K562 (cell line): ENCODE measurements at regions of chrX and their contacts with region 1.

Region 1: GRCh38 chrX:48021026-48021900 is 14.5 kb downstream of the SPACA5 start:
- DNase-seq: peak; percentile 25 to 52 (median 34)
- ATAC-seq: peak; percentile 78
- H3K4me3 ChIP-seq: peak overlapping the region; percentile 46
- H3K27ac ChIP-seq: peak overlapping the region; percentile 76; the same call in 2 of the 3 replicates
- H3K4me1 ChIP-seq: no peaks in the 10 kb centered on the region
- H3K27me3 ChIP-seq: no peaks in the 10 kb centered on the region
- CTCF ChIP-seq: no peak
- EP300 ChIP-seq: no peak
- POLR2A ChIP-seq: no peak
- RAD21 ChIP-seq: no peak

Region 2: DNA sequence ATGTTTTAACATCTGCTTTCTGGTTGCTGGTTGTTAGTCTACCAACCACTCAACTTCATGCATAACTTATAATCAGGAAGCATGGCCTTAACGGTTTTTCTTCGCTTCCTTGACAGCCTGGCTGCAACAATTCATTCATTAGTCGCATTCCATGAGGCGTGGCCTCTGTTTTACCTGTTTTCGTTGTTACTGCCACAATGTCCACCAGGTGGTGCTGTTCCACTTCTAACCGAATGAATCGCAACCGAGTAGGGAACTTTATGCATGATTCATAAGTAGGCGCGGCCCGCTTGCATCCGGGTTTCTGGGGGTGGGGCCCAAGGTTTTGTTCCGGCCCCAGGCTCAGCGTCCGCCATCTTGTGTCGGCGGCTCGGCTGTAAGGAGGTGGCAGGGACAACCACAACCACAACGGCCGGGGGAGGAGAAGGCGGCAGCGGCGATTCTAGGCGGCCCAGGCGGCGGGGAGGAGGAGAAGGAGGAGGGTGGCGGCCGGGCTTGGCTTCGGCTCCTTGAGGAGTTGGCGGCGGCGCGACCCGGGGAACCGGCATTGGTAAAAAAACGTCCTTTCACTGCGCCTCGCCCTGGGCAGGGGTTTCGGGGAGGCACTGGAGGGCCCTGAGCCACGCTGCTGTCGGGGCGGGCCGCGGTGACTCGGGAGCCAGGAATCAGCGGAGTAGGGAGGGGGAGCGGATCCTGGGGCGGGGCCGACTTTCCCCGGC is 827.6 kb before region 1 on chrX and contains the start of gene UBA1:
- CTCF ChIA-PET with region 1: interaction called, 5 read pairs
- POLR2A ChIA-PET with region 1: no interaction called
- in situ Hi-C with region 1: no loop called
- intact Hi-C with region 1: loop called (anchors 5 kb)
- DNase-seq: peak; percentile 83 to 96 (median 88)
- ATAC-seq: peak; percentile 92
- H3K4me3 ChIP-seq: peak within 1 kb of the TSS; percentile 94
- H3K27ac ChIP-seq: peak within 1 kb of the TSS; percentile 94
- H3K4me1 ChIP-seq: peaks cover 6 to 23% of the 10 kb centered on the region in 2 experiments; a peak in 4 of 5 replicates
- H3K27me3 ChIP-seq: no peaks in the 10 kb centered on the region
- CTCF ChIP-seq: peak; percentile 74 to 89 (median 80)
- EP300 ChIP-seq: 0 out of 2 replicates have a peak, but pooled peaks have one; percentile 13
- POLR2A ChIP-seq: peak; percentile 94
- RAD21 ChIP-seq: peak; percentile 90 to 91
- polyA plus RNA-seq, gene UBA1: 32.0 to 40.1 TPM

Region 3: GRCh38 chrX:47523297-47523696 is 498.0 kb before region 1 on chrX:
- CTCF ChIA-PET with region 1: no interaction called
- POLR2A ChIA-PET with region 1: no interaction called
- in situ Hi-C with region 1: loop called (anchors 25 kb)
- intact Hi-C with region 1: no loop called
- DNase-seq: peak; percentile 81 to 87 (median 83)
- ATAC-seq: peak; percentile 100
- H3K4me3 ChIP-seq: peak overlapping the region; percentile 41
- H3K27ac ChIP-seq: no peak overlapping the region
- H3K4me1 ChIP-seq: peaks cover 0 to 11% of the 10 kb centered on the region in 2 experiments; a peak in 2 of 5 replicates
- H3K27me3 ChIP-seq: peaks cover 0 to 4% of the 10 kb centered on the region in 2 experiments; a peak in 1 of 5 replicates
- CTCF ChIP-seq: peak; percentile 69 to 90 (median 86)
- EP300 ChIP-seq: no peak
- POLR2A ChIP-seq: no peak
- RAD21 ChIP-seq: peak; percentile 86 to 87

Region 4: DNA sequence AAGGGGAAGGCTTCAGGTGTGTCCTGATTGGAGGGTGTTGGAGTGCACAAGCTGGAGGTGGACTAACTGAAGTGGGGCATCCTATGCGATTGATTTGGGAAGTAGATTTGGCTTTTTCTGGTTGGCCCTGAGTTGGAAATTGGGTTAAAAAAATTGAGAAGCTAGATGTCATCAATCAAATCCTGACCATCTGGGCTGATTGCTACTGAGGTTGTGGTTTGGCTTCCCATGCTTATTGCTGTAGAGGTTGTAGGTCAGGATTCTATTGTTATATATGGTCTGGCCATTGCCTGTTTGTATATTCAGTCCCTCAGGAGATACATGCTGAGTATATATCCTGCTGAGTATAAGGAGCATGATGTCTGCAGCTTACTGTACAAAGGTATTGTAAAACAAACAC is 192.3 kb before region 1 on chrX:
- CTCF ChIA-PET with region 1: interaction called, 22 read pairs
- POLR2A ChIA-PET with region 1: no interaction called
- in situ Hi-C with region 1: loop called (anchors 10 kb)
- intact Hi-C with region 1: loop called (anchors 1 kb)
- DNase-seq: no peak
- ATAC-seq: no peak
- H3K4me3 ChIP-seq: no peak overlapping the region
- H3K27ac ChIP-seq: no peak overlapping the region
- H3K4me1 ChIP-seq: no peaks in the 10 kb centered on the region
- H3K27me3 ChIP-seq: no peaks in the 10 kb centered on the region
- CTCF ChIP-seq: no peak
- EP300 ChIP-seq: no peak
- POLR2A ChIP-seq: no peak
- RAD21 ChIP-seq: no peak

Region 5: GRCh38 chrX:47854474-47854873 is 166.8 kb before region 1 on chrX:
- CTCF ChIA-PET with region 1: interaction called, 7 read pairs
- POLR2A ChIA-PET with region 1: no interaction called
- in situ Hi-C with region 1: no loop called
- intact Hi-C with region 1: loop called (anchors 1 kb)
- DNase-seq: peak in 1 of 4 experiments; percentile 24
- ATAC-seq: peak; percentile 67; the same call in 2 of the 3 replicates
- H3K4me3 ChIP-seq: no peak overlapping the region
- H3K27ac ChIP-seq: no peak overlapping the region
- H3K4me1 ChIP-seq: no peaks in the 10 kb centered on the region; a peak in 1 of 5 replicates
- H3K27me3 ChIP-seq: no peaks in the 10 kb centered on the region
- CTCF ChIP-seq: peak; percentile 40 to 56 (median 48); a peak in 4 of 6 replicates
- EP300 ChIP-seq: no peak
- POLR2A ChIP-seq: no peak
- RAD21 ChIP-seq: peak in 1 of 2 experiments; percentile 51; a peak in 3 of 4 replicates

Region 6: DNA sequence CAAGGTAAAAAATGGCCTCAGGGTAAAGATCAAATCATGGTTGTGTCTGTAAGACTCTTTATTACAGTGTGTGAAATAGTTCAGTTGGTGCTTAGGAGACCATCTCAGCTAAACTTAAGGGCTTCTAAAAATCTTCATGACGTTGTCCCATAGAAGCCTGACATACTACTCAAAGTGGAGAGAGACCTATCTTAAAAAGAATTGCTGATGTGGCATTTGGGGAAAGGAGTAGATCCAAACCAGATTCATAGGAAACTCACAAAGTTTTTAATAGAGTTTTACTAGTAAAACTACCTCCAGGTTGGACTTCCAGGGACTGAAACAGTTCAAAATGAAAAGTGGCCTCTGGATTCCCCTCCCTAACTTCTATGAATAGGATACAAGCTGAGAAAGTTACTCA is 103.0 kb before region 1 on chrX:
- CTCF ChIA-PET with region 1: no interaction called
- POLR2A ChIA-PET with region 1: no interaction called
- in situ Hi-C with region 1: no loop called
- intact Hi-C with region 1: no loop called
- DNase-seq: no peak
- ATAC-seq: no peak
- H3K4me3 ChIP-seq: no peak overlapping the region
- H3K27ac ChIP-seq: no peak overlapping the region
- H3K4me1 ChIP-seq: no peaks in the 10 kb centered on the region
- H3K27me3 ChIP-seq: no peaks in the 10 kb centered on the region
- CTCF ChIP-seq: no peak
- EP300 ChIP-seq: no peak
- POLR2A ChIP-seq: no peak
- RAD21 ChIP-seq: no peak